ENCODE measurements at regions of chr7 and their contacts with region 1.

Region 1: DNA sequence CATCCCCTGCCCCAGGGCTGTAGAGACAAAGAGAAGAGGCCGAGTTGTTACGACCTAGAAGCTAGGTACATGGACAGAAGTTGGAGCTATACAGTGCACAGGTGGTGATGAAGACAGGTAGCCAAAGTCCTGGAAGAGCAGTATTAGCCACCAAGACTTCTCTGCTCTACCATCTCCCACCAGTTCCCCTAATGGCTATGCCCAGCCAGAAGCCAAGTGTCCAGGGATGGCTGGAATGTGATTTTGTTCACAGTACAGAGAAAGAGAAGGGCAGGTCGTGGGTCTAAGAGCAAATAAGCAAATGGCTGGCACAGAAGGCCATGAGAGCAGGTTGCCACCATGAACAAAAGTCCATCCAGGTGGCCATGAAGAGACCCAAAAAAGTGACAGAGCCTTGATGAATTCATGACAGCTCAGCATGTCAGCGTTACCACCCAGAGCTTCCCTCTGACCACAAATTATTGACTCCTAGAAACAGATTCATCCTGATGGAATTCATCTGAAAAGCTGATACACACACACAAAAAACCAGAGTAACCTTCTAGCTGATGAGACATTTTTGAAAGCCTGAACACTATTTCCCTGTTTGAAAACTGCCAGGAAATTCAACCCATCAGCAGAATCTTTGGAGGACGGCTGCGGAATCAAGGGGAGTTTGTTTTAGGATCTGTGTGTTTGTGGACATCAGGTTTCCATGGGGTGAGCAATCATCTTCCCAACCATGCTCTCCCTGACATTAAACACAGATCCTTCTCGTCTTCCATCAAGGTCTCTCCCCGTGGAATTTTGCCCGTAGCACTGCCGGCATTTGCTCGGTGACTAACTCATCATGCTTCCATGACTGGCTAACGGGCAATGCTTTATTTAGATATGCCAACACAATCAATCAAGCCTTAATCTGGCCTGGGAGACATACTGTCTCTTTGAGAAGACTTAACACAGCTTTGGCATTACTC is 906.7 kb upstream of the AUTS2 start:
- DNase-seq: no peak
- ATAC-seq: no peak
- H3K4me3 ChIP-seq: no peak overlapping the region
- H3K27ac ChIP-seq: no peak overlapping the region
- H3K4me1 ChIP-seq: no peaks in the 10 kb centered on the region
- H3K27me3 ChIP-seq: peaks cover 0 to 5% (median 0%) of the 10 kb centered on the region in 7 donors
- CTCF ChIP-seq: no peak

Region 2: DNA sequence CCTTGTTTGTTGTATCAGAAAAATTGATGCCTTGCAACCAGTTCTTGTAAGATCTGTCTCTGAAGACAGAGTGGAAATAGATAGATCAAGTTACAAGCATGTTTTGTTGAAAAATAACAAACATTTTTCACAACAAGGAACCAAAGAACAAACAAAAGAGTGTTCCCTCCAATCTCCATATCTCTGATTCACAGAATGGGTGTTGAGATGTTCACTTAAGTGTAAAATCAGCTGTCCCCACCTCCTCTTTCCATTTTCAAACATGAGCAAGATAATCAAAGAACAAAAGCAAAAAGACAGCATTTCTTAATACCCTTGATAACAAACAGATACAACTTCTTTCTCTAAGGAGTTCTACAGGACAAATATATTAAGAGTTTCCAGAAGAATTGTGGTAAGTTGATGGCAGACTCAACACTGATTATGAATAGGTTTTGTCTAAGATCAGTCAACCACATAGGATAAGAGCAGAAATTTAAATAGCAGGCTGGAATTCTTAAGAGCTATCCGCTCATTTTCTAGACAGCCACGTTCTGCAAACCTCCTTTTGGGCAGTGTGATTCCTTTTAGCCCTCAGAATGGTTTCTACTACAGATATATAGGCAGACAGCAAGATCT is 64.2 kb before region 1 on chr7:
- intact Hi-C with region 1: loop called in 1 of 10 experiments (anchors 10 kb)
- DNase-seq: no peak
- ATAC-seq: no peak
- H3K4me3 ChIP-seq: no peak overlapping the region
- H3K27ac ChIP-seq: no peak overlapping the region
- H3K4me1 ChIP-seq: no peaks in the 10 kb centered on the region
- H3K27me3 ChIP-seq: peaks cover 0 to 18% (median 0%) of the 10 kb centered on the region in 7 donors
- CTCF ChIP-seq: no peak

Region 3: DNA sequence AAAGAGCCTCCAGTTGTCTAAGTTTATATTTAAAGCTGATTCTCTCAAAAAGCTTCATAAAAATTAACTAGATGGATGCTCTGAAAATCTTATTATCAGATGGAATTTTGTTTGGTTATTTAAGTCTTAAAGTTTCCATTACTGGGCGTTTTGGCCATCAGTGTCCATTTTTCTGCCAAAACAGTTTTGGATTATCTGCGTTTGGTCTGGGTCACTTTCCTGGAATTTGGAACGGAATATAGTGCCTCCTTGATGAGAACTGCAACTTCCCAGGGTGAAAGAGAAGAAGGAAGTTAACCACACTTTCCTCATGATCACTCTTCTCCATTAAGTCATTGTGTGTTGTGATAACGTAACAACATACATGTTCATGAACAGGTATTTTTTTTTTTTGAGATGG is 141.9 kb after region 1 on chr7:
- intact Hi-C with region 1: no loop called
- DNase-seq: no peak
- ATAC-seq: no peak
- H3K4me3 ChIP-seq: no peak overlapping the region
- H3K27ac ChIP-seq: no peak overlapping the region
- H3K4me1 ChIP-seq: peaks cover 0 to 3% (median 0%) of the 10 kb centered on the region in 9 donors
- H3K27me3 ChIP-seq: peaks cover 0 to 7% (median 0%) of the 10 kb centered on the region in 7 donors
- CTCF ChIP-seq: no peak